ENCODE measurements at regions of chr16 and their contacts with region 1.

Region 1: GRCh38 chr16:30429678-30430427 is at the start of gene DCTPP1:
- DNase-seq: peak; percentile 97
- H3K4me3 Mint-ChIP-seq: no peak within 1 kb of the TSS
- H3K27ac Mint-ChIP-seq: no peak within 1 kb of the TSS
- H3K4me1 Mint-ChIP-seq: peaks cover 35% of the 10 kb centered on the region
- H3K27me3 Mint-ChIP-seq: no peaks in the 10 kb centered on the region
- total RNA-seq, gene DCTPP1: 87.5 to 96.6 TPM

Region 2: DNA sequence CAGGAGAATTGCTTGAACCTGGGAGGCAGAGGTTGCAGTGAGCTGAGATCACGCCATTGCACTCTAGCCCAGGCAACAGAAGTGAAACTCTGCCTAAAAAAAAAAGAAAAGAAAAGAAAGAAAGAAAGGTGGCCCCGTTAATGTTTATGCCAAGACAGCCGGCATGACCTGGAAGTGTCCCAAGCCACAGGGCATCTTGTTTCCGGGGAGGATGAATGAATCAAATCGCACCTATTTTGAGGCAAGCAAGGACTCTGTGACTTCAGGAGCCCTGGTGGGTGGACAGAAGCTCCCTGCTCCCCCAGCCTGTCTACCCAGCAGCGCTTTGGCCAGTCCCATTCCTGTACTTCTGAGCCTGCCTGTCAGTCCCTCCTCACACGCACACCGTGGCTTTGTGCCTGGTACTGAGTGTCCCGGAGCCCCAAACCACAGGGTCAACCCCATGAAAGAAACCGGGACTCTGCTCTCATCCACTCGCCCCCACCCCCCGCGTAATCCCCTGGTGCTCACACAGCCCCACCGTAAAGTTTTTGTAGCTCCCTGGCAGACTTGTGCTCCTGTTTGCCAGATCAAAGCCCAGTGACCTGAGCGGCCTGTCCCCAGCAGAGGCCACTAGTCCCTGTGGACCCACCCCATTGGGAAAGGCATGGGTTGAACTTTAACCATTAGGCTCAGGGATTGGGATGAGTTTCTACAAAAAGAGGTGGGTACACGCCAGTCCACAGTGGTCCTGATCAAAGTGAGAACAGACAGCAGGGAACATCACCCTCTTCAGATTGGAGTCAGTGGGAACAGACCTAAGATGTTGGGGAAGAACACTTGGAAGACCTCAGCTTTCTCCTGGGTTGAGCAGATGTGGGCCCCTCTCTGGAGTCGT is 94.0 kb before region 1 on chr16:
- CTCF ChIA-PET with region 1: no interaction called
- POLR2A ChIA-PET with region 1: no interaction called
- intact Hi-C with region 1: no loop called
- DNase-seq: peak; percentile 61
- H3K4me3 Mint-ChIP-seq: peak overlapping the region; percentile 94
- H3K27ac Mint-ChIP-seq: peak overlapping the region; percentile 84
- H3K4me1 Mint-ChIP-seq: peaks cover 12% of the 10 kb centered on the region
- H3K27me3 Mint-ChIP-seq: no peaks in the 10 kb centered on the region

Region 3: GRCh38 chr16:30417529-30418349 is 12.1 kb before region 1 on chr16:
- CTCF ChIA-PET with region 1: interaction called, 46 read pairs
- POLR2A ChIA-PET with region 1: interaction called, 13 read pairs
- intact Hi-C with region 1: no loop called
- DNase-seq: peak; percentile 92
- H3K4me3 Mint-ChIP-seq: peak overlapping the region; percentile 58
- H3K27ac Mint-ChIP-seq: no peak overlapping the region
- H3K4me1 Mint-ChIP-seq: peaks cover 28% of the 10 kb centered on the region
- H3K27me3 Mint-ChIP-seq: no peaks in the 10 kb centered on the region

Region 4: DNA sequence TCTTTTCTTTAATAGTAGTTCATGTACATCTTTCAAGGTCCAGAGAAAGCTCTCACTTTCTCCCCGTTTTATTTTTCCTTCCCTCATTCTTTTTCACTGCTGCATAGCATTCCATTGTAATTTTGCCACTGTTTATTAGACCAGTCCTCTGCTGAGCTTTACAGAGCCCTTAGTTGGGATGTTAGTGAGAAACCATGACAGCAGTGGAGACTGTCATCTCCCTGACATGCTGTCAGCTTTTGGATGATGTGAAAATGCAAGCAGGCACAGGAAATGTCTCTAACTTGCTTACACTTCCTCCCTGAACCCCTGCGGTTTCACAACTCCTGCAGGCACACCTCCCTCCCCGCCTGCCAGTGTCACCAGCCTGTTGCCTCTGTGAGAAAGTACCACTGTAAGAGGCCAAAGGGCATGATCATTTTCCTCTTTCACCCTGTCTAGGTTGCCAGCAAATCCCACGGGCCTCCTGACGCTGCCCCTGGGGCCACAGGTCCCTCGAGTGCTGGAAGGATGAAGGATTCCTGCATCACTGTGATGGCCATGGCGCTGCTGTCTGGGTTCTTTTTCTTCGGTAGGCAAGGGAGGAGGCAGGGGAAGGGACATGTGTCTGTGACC is 42.6 kb after region 1 on chr16 and contains the start of gene ITGAL:
- CTCF ChIA-PET with region 1: interaction called, 36 read pairs
- POLR2A ChIA-PET with region 1: interaction called, 26 read pairs
- intact Hi-C with region 1: loop called (anchors 1 kb)
- DNase-seq: peak; percentile 93
- H3K4me3 Mint-ChIP-seq: peak within 1 kb of the TSS; percentile 98
- H3K27ac Mint-ChIP-seq: peak within 1 kb of the TSS; percentile 97
- H3K4me1 Mint-ChIP-seq: peaks cover 53% of the 10 kb centered on the region
- H3K27me3 Mint-ChIP-seq: no peaks in the 10 kb centered on the region
- total RNA-seq, gene ITGAL: 218 to 226 TPM

Region 5: DNA sequence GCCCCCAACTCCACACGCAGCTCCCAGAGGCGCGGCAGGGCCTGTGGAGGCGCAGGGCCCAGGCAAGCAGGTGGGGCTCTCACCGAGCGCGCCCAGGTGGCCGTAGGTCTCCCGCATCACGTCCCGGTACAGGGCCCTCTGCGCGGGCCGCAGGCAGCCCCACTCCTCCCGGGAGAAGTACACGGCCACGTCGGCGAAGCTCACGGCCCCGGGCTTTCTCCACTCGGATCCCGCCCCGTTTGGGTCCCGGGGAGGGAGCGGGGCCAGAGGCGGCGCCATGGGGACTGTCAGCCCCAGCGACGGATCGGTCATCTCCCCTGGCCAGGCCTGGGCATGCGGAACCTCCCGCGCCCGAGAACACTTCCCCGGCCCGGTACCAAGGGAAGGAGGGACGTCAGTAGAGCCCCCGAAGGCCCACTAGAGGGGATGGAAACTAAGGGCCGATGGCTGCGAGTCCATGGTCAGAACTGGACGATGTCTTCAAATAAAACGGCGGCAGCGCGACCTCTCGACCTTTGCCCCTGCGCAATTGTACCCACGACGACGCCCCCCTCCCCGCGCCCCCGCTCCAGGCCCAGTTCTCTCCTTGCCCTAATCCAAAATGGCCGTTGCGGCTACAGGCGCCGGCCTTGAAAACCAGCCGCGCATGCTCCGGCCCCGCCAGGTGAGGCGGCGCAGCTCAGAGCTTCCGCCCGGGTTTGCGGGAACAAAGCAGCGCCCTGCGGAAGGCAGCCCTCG is 104.7 kb after region 1 on chr16 and contains the start of gene ZNF747:
- CTCF ChIA-PET with region 1: interaction called, 39 read pairs
- POLR2A ChIA-PET with region 1: interaction called, 24 read pairs
- intact Hi-C with region 1: loop called (anchors 5 kb)
- DNase-seq: peak; percentile 94
- H3K4me3 Mint-ChIP-seq: peak within 1 kb of the TSS; percentile 89
- H3K27ac Mint-ChIP-seq: peak within 1 kb of the TSS; percentile 95
- H3K4me1 Mint-ChIP-seq: peaks cover 38% of the 10 kb centered on the region
- H3K27me3 Mint-ChIP-seq: no peaks in the 10 kb centered on the region
- total RNA-seq, gene ZNF747: 7.2 to 7.6 TPM

Region 6: GRCh38 chr16:30602616-30603277 is 172.9 kb after region 1 on chr16:
- CTCF ChIA-PET with region 1: interaction called, 44 read pairs
- POLR2A ChIA-PET with region 1: no interaction called
- intact Hi-C with region 1: loop called (anchors 5 kb)
- DNase-seq: no peak
- H3K4me3 Mint-ChIP-seq: no peak overlapping the region
- H3K27ac Mint-ChIP-seq: no peak overlapping the region
- H3K4me1 Mint-ChIP-seq: peaks cover 8% of the 10 kb centered on the region
- H3K27me3 Mint-ChIP-seq: no peaks in the 10 kb centered on the region

Region 7: GRCh38 chr16:30628627-30629540 is 199.0 kb after region 1 on chr16:
- CTCF ChIA-PET with region 1: interaction called, 12 read pairs
- POLR2A ChIA-PET with region 1: interaction called, 3 read pairs
- intact Hi-C with region 1: no loop called
- DNase-seq: peak; percentile 94
- H3K4me3 Mint-ChIP-seq: peak overlapping the region; percentile 60
- H3K27ac Mint-ChIP-seq: peak overlapping the region; percentile 57
- H3K4me1 Mint-ChIP-seq: peaks cover 4% of the 10 kb centered on the region
- H3K27me3 Mint-ChIP-seq: no peaks in the 10 kb centered on the region

Measured in activated CD4-positive, alpha-beta memory T cell treated with anti-CD3 and anti-CD28 coated beads for 36 hours (primary cell).